ENCODE measurements at regions of chr1 and their contacts with region 1.

Region 1: DNA sequence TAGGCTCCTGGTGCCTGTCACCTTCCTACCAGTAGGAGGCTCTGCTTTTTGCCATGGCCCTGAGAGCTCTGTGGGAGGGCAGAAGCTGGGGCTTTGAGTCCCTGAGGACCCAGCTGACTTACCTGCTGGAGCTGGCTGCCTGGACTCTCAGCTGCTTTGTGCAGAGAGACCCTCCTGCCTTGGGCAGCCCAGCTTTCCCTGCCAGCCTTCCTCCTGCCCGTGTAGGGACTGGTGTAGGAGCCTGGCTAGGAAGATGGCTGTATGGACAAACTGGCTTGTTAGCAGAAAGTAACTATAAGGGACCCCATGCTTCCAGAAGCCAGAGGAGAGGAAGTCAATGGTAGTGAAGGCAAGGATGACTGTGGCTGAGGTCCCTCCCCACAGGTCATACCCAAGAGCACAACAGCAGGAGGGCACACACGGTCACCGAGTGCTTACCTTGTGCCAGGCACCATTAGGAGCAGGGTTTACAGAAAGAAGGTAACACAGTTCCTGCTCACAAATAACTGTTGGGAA is 9.7 kb upstream of the CELSR2 start:
- DNase-seq: peak; percentile 75
- H3K4me3 Mint-ChIP-seq: peak overlapping the region; percentile 2
- H3K27ac Mint-ChIP-seq: peak overlapping the region; percentile 69
- H3K4me1 Mint-ChIP-seq: peaks cover 23% of the 10 kb centered on the region
- H3K27me3 Mint-ChIP-seq: no peaks in the 10 kb centered on the region
- CTCF ChIP-seq: peak; percentile 52

Region 2: GRCh38 chr1:108780937-108781574 is 458.6 kb before region 1 on chr1:
- CTCF ChIA-PET with region 1: no interaction called
- POLR2A ChIA-PET with region 1: no interaction called
- intact Hi-C with region 1: no loop called
- DNase-seq: no peak
- H3K4me3 Mint-ChIP-seq: no peak overlapping the region
- H3K27ac Mint-ChIP-seq: no peak overlapping the region
- H3K4me1 Mint-ChIP-seq: peaks cover 7% of the 10 kb centered on the region
- H3K27me3 Mint-ChIP-seq: no peaks in the 10 kb centered on the region
- CTCF ChIP-seq: no peak

Region 3: DNA sequence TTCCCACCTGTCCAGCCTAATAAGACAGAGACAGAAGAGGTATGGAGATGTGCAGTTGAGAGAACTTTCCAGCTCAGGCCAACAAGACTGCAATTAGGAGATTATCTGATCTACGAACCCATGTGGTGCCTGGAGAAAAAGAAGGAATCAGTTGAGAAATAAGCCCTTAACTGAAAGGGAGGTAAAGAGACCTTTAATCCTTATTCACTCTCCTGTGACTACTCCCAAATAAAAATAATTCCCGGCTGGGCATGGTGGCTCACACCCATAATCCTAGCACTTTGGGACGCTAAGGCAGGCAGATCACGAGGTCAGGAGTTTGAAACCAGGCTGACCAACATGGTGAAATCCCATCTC is 57.9 kb before region 1 on chr1:
- CTCF ChIA-PET with region 1: no interaction called
- POLR2A ChIA-PET with region 1: no interaction called
- intact Hi-C with region 1: no loop called
- DNase-seq: no peak
- H3K4me3 Mint-ChIP-seq: no peak overlapping the region
- H3K27ac Mint-ChIP-seq: no peak overlapping the region
- H3K4me1 Mint-ChIP-seq: peaks cover 11% of the 10 kb centered on the region
- H3K27me3 Mint-ChIP-seq: no peaks in the 10 kb centered on the region
- CTCF ChIP-seq: no peak

Region 4: GRCh38 chr1:109193653-109194590 is 45.7 kb before region 1 on chr1:
- CTCF ChIA-PET with region 1: interaction called, 7 read pairs
- POLR2A ChIA-PET with region 1: interaction called, 25 read pairs
- intact Hi-C with region 1: no loop called
- DNase-seq: peak; percentile 58
- H3K4me3 Mint-ChIP-seq: no peak overlapping the region
- H3K27ac Mint-ChIP-seq: no peak overlapping the region
- H3K4me1 Mint-ChIP-seq: peaks cover 24% of the 10 kb centered on the region
- H3K27me3 Mint-ChIP-seq: no peaks in the 10 kb centered on the region
- CTCF ChIP-seq: peak; percentile 59

Region 5: DNA sequence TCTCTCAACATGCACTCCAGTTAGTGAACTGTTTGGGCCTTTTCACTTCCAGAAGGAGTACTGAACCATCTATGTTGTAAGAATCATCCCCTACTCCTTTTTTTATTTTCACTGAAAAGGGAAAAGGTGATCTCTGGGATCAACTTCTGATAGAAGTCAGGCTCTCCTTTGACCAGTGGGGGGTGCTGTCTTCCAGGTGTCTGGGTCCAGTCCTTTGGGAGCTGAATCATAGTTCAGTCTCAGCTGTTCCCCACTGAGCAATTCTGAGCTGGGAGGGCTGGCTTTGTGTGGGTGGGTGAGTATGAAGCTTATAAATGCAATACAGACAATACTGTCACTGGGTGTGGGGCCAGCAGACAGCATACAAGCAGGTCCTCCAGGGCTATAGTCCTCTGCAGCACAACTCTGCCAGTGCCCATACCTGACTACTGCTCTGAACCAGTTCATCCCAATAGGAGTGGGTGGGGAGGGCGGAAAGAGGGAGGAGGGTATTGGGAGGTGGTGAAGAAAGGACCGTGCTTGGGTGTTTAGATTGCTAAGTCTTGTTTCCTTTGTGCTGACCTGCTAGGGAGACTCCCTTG is 38.4 kb before region 1 on chr1:
- CTCF ChIA-PET with region 1: interaction called, 12 read pairs
- POLR2A ChIA-PET with region 1: interaction called, 25 read pairs
- intact Hi-C with region 1: loop called (anchors 1 kb)
- DNase-seq: peak; percentile 93
- H3K4me3 Mint-ChIP-seq: no peak overlapping the region
- H3K27ac Mint-ChIP-seq: no peak overlapping the region
- H3K4me1 Mint-ChIP-seq: peaks cover 28% of the 10 kb centered on the region
- H3K27me3 Mint-ChIP-seq: no peaks in the 10 kb centered on the region
- CTCF ChIP-seq: peak; percentile 76

Region 6: DNA sequence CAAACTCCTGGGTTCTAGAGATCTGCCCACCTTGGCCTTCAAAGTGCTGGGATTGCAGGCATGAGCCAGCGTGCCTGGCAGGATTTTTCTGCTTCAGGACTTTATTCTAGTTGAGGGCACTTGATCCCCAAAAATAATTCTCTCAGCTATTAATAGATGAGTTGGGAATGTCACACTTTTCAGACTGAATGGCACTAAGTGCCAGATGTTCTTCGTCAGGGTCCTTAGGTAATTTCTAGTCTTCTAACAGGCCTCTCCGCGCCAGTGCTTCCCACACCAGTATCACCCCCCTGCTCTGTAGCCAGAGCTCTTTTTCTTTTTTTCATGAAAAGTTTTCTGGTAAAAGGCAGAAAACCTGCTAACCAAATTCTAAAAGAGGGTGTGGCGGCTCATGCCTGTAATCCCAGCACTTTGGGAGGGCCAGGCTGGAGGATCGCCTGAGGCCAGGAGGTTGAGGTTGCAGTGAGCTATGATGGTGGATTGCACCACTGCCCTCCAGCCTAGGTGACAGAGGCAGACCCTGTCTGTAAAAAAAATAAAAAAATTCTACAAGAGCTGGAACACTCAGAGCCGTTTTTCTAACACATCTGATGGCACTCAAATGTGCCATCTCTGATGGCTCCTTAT is 32.1 kb before region 1 on chr1:
- CTCF ChIA-PET with region 1: interaction called, 11 read pairs
- POLR2A ChIA-PET with region 1: interaction called, 68 read pairs
- intact Hi-C with region 1: no loop called
- DNase-seq: peak; percentile 50
- H3K4me3 Mint-ChIP-seq: no peak overlapping the region
- H3K27ac Mint-ChIP-seq: no peak overlapping the region
- H3K4me1 Mint-ChIP-seq: peaks cover 27% of the 10 kb centered on the region
- H3K27me3 Mint-ChIP-seq: no peaks in the 10 kb centered on the region
- CTCF ChIP-seq: no peak

Region 7: DNA sequence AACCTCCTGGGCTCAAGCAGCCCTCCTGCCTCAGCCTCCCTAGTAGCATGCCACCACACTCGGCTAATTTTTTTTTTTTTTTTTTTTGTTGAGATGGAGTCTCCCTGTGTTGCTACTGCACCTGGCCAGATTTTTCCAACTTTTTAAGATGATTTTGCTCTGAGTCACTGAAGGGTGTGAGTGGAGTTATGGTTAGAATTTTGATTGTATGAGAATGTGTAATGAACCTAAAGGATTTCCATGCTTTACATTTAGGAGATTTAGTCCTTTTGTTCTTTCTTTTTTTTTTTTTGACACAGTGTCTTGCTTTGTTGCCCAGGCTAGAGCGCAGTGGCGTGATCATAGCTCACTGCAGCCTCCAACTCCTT is 13.6 kb before region 1 on chr1:
- CTCF ChIA-PET with region 1: interaction called, 7 read pairs
- POLR2A ChIA-PET with region 1: interaction called, 33 read pairs
- intact Hi-C with region 1: no loop called
- DNase-seq: peak; percentile 23
- H3K4me3 Mint-ChIP-seq: no peak overlapping the region
- H3K27ac Mint-ChIP-seq: peak overlapping the region; percentile 78
- H3K4me1 Mint-ChIP-seq: peaks cover 12% of the 10 kb centered on the region
- H3K27me3 Mint-ChIP-seq: no peaks in the 10 kb centered on the region
- CTCF ChIP-seq: no peak

Region 8: DNA sequence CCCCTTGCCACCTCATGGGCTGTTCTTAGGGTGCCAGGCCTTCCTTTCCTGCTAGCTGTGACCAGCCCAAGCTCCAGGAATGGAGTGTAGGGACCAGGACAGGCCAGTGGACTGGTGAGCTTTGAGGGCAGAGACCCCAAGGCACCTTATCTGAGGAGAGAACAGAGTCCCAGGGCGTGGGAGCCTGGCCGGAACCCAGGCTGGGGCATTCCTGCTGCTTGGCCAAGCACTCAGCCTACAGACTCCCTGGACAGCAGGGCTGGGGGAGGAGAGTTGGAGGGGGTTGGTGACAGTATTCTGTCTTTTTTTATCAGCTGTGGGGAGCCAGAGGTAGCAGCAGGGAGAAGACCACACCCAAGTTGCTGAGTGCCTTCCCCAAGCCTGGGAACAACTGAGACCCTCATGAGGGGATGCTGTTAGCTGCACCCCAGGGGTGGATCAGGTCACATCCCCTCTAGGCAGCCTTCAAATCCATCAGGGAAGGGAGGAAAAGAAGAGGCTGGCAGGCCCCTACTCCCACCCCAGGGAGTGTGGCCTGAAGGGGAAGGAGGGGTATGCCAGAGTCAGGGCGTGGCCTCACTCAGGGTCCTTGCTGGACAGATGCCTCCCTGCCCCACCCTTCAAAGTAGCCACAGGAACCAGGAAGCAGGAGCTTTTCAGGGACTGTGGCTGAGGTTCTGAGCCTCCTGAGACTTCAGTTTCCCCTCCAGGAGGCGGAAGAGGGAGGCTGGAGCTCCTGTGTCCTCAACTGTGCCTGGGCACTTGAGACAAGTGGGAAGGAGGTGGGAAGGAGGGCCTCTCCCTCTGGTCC is 14.7 kb after region 1 on chr1:
- CTCF ChIA-PET with region 1: interaction called, 11 read pairs
- POLR2A ChIA-PET with region 1: interaction called, 19 read pairs
- intact Hi-C with region 1: loop called (anchors 1 kb)
- DNase-seq: no peak
- H3K4me3 Mint-ChIP-seq: no peak overlapping the region
- H3K27ac Mint-ChIP-seq: no peak overlapping the region
- H3K4me1 Mint-ChIP-seq: peaks cover 21% of the 10 kb centered on the region
- H3K27me3 Mint-ChIP-seq: no peaks in the 10 kb centered on the region
- CTCF ChIP-seq: no peak

Region 9: GRCh38 chr1:109307274-109308021 is 67.8 kb after region 1 on chr1:
- CTCF ChIA-PET with region 1: no interaction called
- POLR2A ChIA-PET with region 1: no interaction called
- intact Hi-C with region 1: no loop called
- DNase-seq: no peak
- H3K4me3 Mint-ChIP-seq: no peak overlapping the region
- H3K27ac Mint-ChIP-seq: no peak overlapping the region
- H3K4me1 Mint-ChIP-seq: peaks cover under 1% of the 10 kb centered on the region
- H3K27me3 Mint-ChIP-seq: no peaks in the 10 kb centered on the region
- CTCF ChIP-seq: no peak

Measured in MCF 10A (cell line).